A549 (cell line): ENCODE measurements at regions of chr2 and their contacts with region 1.

Region 1: GRCh38 chr2:10532638-10533101 is 84.5 kb upstream of the ODC1 start:
- DNase-seq: no peak
- ATAC-seq: no peak
- H3K4me3 ChIP-seq: no peak overlapping the region
- H3K27ac ChIP-seq: no peak overlapping the region
- H3K4me1 ChIP-seq: no peaks in the 10 kb centered on the region
- CTCF ChIP-seq: no peak
- EP300 ChIP-seq: no peak
- POLR2A ChIP-seq: no peak
- RAD21 ChIP-seq: no peak

Region 2: DNA sequence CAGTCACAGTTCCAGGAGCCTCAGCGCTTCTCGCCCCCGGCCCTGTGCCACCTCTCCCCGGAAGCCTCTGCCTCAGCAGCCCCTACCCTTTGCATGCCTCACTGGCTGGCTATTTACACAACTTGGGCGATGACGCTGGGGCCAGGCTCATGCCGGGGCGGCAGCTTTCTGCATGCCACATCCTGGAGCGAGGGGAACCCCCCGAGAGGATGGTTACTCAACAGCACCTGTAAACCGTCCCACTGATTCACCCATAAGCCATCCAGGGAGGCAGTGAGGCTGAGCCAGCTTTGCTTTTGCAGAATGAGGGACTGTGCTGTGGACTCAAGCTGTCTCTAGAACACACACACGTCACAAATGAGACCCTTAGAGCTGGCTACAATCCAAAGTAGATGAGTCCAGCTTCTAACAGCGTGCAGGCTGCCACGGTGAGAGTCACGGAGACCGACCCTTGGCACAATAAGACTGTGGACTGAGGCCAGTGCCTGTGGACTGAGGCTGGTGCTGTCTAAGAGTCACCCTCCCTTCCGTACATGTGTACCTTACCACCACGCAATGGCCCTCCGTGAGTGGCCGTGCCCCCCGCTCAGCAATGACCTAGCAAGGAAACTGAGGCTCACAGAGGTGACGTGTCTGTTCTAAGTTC is 38.9 kb before region 1 on chr2:
- CTCF ChIA-PET with region 1: no interaction called
- POLR2A ChIA-PET with region 1: no interaction called
- DNase-seq: peak; percentile 93 to 95
- ATAC-seq: peak; percentile 86 to 87
- H3K4me3 ChIP-seq: 0 out of 3 replicates have a peak overlapping the region, but pooled peaks have one; percentile 7
- H3K27ac ChIP-seq: peak overlapping the region; percentile 71 to 83
- H3K4me1 ChIP-seq: peaks cover 57% of the 10 kb centered on the region
- CTCF ChIP-seq: no peak
- EP300 ChIP-seq: peak; percentile 94 to 98; a peak in 3 of 5 replicates
- POLR2A ChIP-seq: no peak
- RAD21 ChIP-seq: peak in 1 of 2 experiments; percentile 68; a peak in 3 of 5 replicates

Region 3: DNA sequence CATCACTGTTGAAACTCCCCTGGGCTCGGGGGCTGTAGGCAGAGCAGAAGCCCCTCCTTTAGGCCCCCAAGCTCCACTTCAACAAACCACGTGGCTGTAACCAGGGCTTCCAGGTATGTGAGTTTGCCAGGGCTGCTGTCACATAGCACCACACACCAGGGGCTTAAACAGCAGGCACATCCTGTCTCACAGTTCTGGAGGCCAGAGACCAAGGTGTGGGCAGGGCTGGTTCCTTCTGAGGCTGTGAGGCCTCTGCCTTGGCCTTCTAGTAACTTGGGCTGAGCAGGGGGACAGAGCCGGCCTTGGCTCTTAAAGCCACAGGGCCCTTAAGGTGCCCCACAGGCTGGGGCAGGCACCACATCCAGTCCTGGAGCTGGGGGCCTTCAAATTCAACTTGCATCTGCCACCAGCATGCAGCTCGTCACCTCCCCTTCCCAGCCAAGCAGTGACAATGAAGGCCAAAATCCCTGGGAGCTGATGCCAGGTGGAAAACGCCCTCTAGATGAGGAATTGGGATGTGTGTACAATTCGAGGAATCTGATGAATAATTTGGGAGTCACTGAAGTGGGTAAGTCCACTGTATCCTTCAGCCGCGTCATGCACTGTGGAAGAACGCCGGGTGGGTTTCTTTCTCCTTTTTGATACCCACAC is 19.7 kb after region 1 on chr2:
- CTCF ChIA-PET with region 1: interaction called, 11 read pairs
- POLR2A ChIA-PET with region 1: no interaction called
- DNase-seq: no peak
- ATAC-seq: peak; percentile 20 to 35; a peak in 4 of 6 replicates
- H3K4me3 ChIP-seq: no peak overlapping the region
- H3K27ac ChIP-seq: no peak overlapping the region
- H3K4me1 ChIP-seq: no peaks in the 10 kb centered on the region
- CTCF ChIP-seq: no peak
- EP300 ChIP-seq: no peak
- POLR2A ChIP-seq: no peak
- RAD21 ChIP-seq: peak in 1 of 2 experiments; percentile 33; a peak in 2 of 5 replicates